Aorta (tissue), 5 donors: ENCODE measurements at regions of chr6 and their contacts with region 1.

Region 1: GRCh38 chr6:29887819-29888776 is 54.2 kb upstream of the HLA-A start:
- DNase-seq: peak; percentile 91 to 93
- ATAC-seq: peak; percentile 94
- H3K4me3 ChIP-seq: peak overlapping the region; percentile 72 to 86
- H3K27ac ChIP-seq: peak overlapping the region; percentile 39 to 83
- H3K4me1 ChIP-seq: no peaks in the 10 kb centered on the region
- H3K27me3 ChIP-seq: no peaks in the 10 kb centered on the region

Region 2: GRCh38 chr6:29926413-29927274 is 38.5 kb after region 1 on chr6:
- intact Hi-C with region 1: loop called in 1 of 2 experiments (anchors 5 kb)
- DNase-seq: peak; percentile 89 to 91
- ATAC-seq: peak; percentile 93
- H3K4me3 ChIP-seq: peak overlapping the region; percentile 38 to 56
- H3K27ac ChIP-seq: peak overlapping the region in 1 of 2 donors; percentile 72
- H3K4me1 ChIP-seq: no peaks in the 10 kb centered on the region
- H3K27me3 ChIP-seq: no peaks in the 10 kb centered on the region

Region 3: DNA sequence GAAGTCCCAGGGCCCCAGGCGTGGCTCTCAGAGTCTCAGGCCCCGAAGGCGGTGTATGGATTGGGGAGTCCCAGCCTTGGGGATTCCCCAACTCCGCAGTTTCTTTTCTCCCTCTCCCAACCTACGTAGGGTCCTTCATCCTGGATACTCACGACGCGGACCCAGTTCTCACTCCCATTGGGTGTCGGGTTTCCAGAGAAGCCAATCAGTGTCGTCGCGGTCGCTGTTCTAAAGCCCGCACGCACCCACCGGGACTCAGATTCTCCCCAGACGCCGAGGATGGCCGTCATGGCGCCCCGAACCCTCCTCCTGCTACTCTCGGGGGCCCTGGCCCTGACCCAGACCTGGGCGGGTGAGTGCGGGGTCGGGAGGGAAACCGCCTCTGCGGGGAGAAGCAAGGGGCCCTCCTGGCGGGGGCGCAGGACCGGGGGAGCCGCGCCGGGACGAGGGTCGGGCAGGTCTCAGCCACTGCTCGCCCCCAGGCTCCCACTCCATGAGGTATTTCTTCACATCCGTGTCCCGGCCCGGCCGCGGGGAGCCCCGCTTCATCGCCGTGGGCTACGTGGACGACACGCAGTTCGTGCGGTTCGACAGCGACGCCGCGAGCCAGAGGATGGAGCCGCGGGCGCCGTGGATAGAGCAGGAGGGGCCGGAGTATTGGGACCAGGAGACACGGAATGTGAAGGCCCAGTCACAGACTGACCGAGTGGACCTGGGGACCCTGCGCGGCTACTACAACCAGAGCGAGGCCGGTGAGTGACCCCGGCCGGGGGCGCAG is 54.4 kb after region 1 on chr6 and contains the start of gene HLA-A:
- intact Hi-C with region 1: loop called (anchors 5 kb)
- DNase-seq: peak; percentile 96 to 97
- ATAC-seq: peak; percentile 99
- H3K4me3 ChIP-seq: peak within 1 kb of the TSS; percentile 64 to 91
- H3K27ac ChIP-seq: peak within 1 kb of the TSS; percentile 69 to 71
- H3K4me1 ChIP-seq: no peaks in the 10 kb centered on the region
- H3K27me3 ChIP-seq: no peaks in the 10 kb centered on the region
- total RNA-seq, gene HLA-A: 468 to 599 TPM

Region 4: DNA sequence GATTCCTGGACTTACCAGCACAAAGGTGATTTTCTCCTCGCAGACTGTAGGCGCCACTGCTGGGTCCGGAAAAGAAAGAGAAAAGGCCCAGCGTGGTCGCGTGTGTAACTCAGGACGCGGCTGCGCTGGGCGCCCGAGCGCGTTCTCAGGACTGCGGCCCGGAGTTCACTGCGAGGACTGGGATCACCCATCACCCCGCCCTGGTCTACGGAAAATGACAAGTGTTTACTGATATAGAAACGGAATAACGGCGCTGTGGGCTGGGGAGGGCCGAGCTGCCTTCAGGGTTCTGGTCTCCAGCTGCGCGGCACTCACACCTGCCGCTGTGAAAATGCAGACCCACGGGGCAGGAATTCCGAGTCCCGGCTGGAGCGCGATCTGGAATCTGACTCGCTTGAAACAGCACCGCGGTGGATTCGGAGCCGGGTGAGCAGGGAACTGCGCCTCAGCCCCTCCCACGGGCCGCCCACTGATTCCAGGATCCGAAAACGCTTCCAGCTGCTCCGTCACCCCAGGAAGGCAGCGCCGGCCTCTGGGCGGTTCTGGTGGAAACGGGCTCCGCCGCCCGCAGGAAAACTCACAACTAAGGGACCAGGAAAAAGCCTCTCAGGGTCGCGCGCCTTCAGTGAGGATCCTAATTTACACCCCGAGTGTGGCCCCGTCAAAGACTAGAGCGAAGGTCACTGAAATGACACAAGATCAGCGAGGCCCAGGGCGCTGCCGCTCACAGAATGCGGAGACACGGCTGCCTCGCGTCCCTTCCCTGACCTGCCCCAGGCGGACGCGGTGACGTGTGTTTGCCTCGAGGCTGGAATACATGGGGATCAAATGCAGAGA is 88.7 kb after region 1 on chr6:
- intact Hi-C with region 1: loop called (anchors 2 to 5 kb)
- DNase-seq: peak; percentile 92 to 98
- ATAC-seq: peak; percentile 97
- H3K4me3 ChIP-seq: peak overlapping the region; percentile 14 to 28
- H3K27ac ChIP-seq: peak overlapping the region; percentile 8 to 96
- H3K4me1 ChIP-seq: no peaks in the 10 kb centered on the region
- H3K27me3 ChIP-seq: no peaks in the 10 kb centered on the region